GM12878 (cell line): ENCODE measurements at regions of chr9 and their contacts with region 1.

Region 1: GRCh38 chr9:129796029-129796910 is 6.7 kb upstream of the TOR1B start:
- DNase-seq: no peak
- ATAC-seq: no peak
- H3K4me3 ChIP-seq: no peak overlapping the region
- H3K27ac ChIP-seq: no peak overlapping the region
- H3K4me1 ChIP-seq: no peaks in the 10 kb centered on the region
- H3K27me3 ChIP-seq: peaks cover 0 to 2% of the 10 kb centered on the region in 2 experiments; a peak in 1 of 4 replicates
- CTCF ChIP-seq: no peak
- EP300 ChIP-seq: no peak
- POLR2A ChIP-seq: no peak
- RAD21 ChIP-seq: no peak

Region 2: DNA sequence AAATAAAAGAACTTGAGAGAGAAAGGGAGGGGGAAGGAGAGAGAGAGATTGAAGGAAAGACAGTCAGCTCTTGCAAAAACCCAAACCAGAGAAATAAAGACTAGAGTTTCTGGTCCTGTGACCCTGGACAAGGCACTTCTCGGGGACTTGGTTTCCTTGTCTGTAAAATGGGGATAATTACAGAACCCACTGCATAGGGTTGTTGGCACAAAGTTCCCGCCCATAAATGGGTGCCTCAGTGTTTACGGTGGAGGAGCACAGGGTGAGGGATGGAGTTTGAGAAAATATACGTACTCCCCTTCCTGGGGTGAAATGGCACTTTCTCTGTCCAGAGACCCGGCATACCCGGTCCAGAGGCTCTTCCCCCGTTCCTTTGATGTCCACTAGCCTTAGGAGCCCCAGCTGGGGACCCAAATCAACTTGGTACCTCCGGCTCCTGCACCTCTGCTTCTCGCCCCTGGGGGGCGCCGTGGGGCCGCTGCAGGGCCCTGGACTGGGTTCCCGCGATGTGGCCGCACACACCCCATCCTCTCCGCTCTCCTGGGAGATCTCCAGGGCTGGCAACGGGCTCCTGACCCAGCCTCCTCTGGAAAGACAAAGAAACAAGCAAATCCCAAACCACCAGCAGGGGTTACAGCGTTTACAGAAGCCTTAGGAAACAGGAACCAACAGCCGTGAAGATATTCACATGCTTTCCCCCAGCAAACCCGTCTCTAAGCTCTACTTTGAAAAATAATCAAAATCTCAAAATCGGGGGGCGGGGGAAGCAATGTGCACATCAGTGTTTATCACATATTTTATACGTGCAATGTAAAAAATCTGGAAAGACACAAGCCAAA is 69.7 kb before region 1 on chr9:
- CTCF ChIA-PET with region 1: interaction called, 16 read pairs
- POLR2A ChIA-PET with region 1: no interaction called
- RAD21 ChIA-PET with region 1: interaction called, 15 read pairs
- SMC1A ChIA-PET with region 1: no interaction called
- in situ Hi-C with region 1: no loop called
- intact Hi-C with region 1: no loop called
- DNase-seq: no peak
- ATAC-seq: peak; percentile 94
- H3K4me3 ChIP-seq: no peak overlapping the region
- H3K27ac ChIP-seq: no peak overlapping the region
- H3K4me1 ChIP-seq: no peaks in the 10 kb centered on the region
- H3K27me3 ChIP-seq: no peaks in the 10 kb centered on the region; a peak in 1 of 4 replicates
- CTCF ChIP-seq: peak; percentile 80 to 93 (median 85)
- EP300 ChIP-seq: no peak
- POLR2A ChIP-seq: no peak
- RAD21 ChIP-seq: peak; percentile 66

Region 3: GRCh38 chr9:129759804-129760502 is 36.3 kb before region 1 on chr9:
- CTCF ChIA-PET with region 1: no interaction called
- POLR2A ChIA-PET with region 1: no interaction called
- RAD21 ChIA-PET with region 1: no interaction called
- SMC1A ChIA-PET with region 1: no interaction called
- in situ Hi-C with region 1: no loop called
- intact Hi-C with region 1: no loop called
- DNase-seq: no peak
- ATAC-seq: no peak
- H3K4me3 ChIP-seq: no peak overlapping the region
- H3K27ac ChIP-seq: no peak overlapping the region
- H3K4me1 ChIP-seq: peaks cover 5% of the 10 kb centered on the region; the same call in 1 of the 2 replicates
- H3K27me3 ChIP-seq: no peaks in the 10 kb centered on the region
- CTCF ChIP-seq: no peak
- EP300 ChIP-seq: no peak
- POLR2A ChIP-seq: no peak
- RAD21 ChIP-seq: no peak